ENCODE measurements at regions of chr5 and their contacts with region 1.

Region 1: GRCh38 chr5:126341906-126342630 is 81.1 kb upstream of the GRAMD2B start:
- DNase-seq: no peak
- H3K4me3 ChIP-seq: no peak overlapping the region
- H3K27ac ChIP-seq: no peak overlapping the region
- H3K4me1 ChIP-seq: no peaks in the 10 kb centered on the region
- H3K27me3 ChIP-seq: no peaks in the 10 kb centered on the region
- CTCF ChIP-seq: no peak

Region 2: GRCh38 chr5:126414874-126415502 is 72.9 kb after region 1 on chr5:
- intact Hi-C with region 1: no loop called
- DNase-seq: no peak
- H3K4me3 ChIP-seq: no peak overlapping the region
- H3K27ac ChIP-seq: no peak overlapping the region
- H3K4me1 ChIP-seq: no peaks in the 10 kb centered on the region
- H3K27me3 ChIP-seq: no peaks in the 10 kb centered on the region
- CTCF ChIP-seq: no peak

Region 3: GRCh38 chr5:126594676-126595485 is 252.8 kb after region 1 on chr5 and contains the start of gene ALDH7A1:
- intact Hi-C with region 1: loop called (anchors 5 kb)
- DNase-seq: peak; percentile 91
- H3K4me3 ChIP-seq: peak within 1 kb of the TSS; percentile 40
- H3K27ac ChIP-seq: peak within 1 kb of the TSS; percentile 42
- H3K4me1 ChIP-seq: peaks cover 3% of the 10 kb centered on the region
- H3K27me3 ChIP-seq: no peaks in the 10 kb centered on the region
- CTCF ChIP-seq: no peak
- total RNA-seq, gene ALDH7A1: 49.2 to 75.7 TPM

Measured in colonic mucosa (tissue), 4 donors.